Breast epithelium (tissue), 4 donors: ENCODE measurements at regions of chr7 and their contacts with region 1.

Region 1: DNA sequence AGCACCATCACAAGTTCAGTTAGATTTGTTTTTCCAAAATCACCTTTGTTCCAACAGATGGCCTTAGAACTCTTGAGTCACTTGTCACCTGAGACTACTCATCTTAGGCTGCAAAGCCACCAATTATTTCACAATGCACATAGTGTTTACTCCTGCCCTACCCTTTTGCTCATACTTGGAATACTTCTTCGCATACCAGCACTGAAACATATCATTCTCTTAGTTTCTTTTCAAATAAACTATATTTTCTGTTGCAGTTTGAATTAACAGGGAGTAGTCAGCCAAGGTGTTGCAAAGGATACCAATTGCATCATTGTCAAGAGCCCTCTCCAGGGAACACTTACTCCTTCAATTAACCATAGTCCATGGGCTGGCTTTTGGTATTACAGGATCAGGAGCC is 71.0 kb downstream of the CASD1 start:
- DNase-seq: no peak
- H3K4me3 ChIP-seq: no peak overlapping the region
- H3K27ac ChIP-seq: no peak overlapping the region
- H3K4me1 ChIP-seq: no peaks in the 10 kb centered on the region
- H3K27me3 ChIP-seq: no peaks in the 10 kb centered on the region
- CTCF ChIP-seq: no peak
- POLR2A ChIP-seq: no peak

Region 2: DNA sequence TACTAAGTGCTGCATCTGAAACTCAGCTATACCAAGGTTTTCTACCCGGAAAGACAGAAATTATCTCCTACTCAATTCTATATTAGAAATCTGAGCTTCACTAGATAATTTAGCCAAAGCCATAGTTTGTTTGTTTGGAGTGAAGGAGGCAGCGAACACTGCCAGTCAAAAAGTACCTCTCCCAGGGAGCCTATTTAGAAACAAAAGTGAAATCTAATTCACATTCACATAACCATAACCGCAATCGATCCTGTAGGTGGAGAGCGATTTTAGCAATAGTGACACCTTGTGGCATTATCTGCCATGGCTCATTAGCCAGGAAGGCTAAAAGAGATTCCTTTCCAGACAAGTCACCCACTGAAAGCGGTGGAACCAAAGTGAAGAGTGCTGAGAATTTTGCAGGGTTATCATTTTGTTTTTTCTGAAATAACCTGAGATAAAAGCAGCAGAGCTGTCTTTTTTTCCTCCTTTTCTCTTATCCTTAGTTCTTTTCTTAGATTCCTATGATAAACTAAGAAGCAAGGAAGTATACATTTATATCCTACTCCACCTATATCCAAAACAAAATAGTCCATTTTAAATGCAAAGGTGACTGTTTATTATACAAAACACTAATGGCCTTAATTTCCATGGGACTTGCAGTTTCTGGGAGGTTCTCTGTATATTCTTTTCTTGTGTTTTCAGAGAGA is 492.8 kb before region 1 on chr7:
- intact Hi-C with region 1: loop called (anchors 5 kb)
- DNase-seq: no peak
- H3K4me3 ChIP-seq: peak overlapping the region in 2 of 3 donors; percentile 28 to 53
- H3K27ac ChIP-seq: no peak overlapping the region
- H3K4me1 ChIP-seq: no peaks in the 10 kb centered on the region
- H3K27me3 ChIP-seq: no peaks in the 10 kb centered on the region
- CTCF ChIP-seq: peak; percentile 60 to 75 (median 75)
- POLR2A ChIP-seq: no peak

Region 3: DNA sequence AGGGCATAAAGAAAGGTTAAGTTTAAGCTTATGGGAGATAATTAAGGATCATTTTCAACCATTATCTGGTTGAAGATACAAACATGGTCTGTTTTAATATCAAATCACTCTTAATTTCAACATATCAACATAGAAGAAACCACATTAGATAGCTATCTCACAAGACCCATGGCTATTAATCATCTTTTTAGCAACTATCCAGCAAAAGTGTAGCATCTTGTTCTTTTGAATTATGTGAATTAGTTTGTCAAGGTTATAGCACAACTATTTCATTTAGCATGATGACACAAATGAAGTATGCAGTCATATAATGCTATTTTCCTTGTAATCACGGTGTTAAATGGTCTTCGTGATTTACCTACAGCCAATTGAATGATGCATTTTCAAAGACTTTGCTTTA is 267.9 kb after region 1 on chr7:
- intact Hi-C with region 1: no loop called
- DNase-seq: no peak
- H3K4me3 ChIP-seq: no peak overlapping the region
- H3K27ac ChIP-seq: no peak overlapping the region
- H3K4me1 ChIP-seq: no peaks in the 10 kb centered on the region
- H3K27me3 ChIP-seq: no peaks in the 10 kb centered on the region
- CTCF ChIP-seq: no peak
- POLR2A ChIP-seq: no peak